ENCODE measurements at regions of chr10 and their contacts with region 1.

Region 1: GRCh38 chr10:122342293-122343134 is 32.0 kb upstream of the PLEKHA1 start:
- DNase-seq: peak in 2 of 5 donors; percentile 43 to 44
- ATAC-seq: peak in 2 of 4 donors; percentile 38 to 46
- H3K4me3 ChIP-seq: no peak overlapping the region
- H3K27ac ChIP-seq: peak overlapping the region in 7 of 12 donors; percentile 30 to 79 (median 69)
- H3K4me1 ChIP-seq: peaks cover 0 to 39% (median 8%) of the 10 kb centered on the region in 12 donors
- H3K27me3 ChIP-seq: no peaks in the 10 kb centered on the region
- CTCF ChIP-seq: peak; percentile 75 to 92 (median 82)
- POLR2A ChIP-seq: no peak

Region 2: DNA sequence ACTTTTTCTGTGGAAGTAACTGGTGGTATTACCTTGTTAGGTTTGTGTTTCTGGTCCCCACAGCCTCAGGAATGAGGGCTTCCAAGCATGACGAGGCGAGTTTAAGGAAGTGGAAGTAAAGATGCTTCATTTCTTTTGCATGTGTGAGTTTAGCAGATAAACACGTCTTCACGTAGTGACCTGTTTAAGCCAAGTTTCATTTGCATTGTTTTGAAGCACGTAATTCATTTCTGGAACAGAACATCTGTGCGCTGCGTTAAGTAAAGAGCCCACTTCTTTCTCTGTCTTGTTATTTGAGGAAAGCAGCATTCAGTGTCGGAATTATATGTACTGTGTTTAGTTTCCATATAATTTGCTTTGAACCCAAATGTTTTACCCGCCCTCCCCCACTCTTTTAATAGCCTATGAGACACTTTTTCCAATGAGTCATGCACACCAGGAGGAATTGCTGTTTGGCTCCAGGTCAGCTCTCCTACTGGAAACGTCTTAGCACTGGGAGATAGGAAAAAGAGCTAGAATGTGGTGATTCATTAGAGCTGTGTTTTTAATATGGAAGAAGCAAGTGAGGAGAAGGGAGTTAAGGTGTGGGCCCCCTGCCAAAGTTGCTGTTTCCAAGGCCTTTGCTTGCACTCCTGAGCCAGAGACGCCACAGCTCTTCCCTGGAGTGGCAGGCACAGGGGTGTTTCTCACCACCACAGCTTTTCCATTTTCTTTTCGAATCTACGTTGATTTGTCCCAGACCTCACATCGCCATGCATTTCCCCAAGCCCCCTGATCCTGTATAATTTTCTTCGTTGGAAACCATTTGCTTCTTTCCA is 34.6 kb before region 1 on chr10:
- intact Hi-C with region 1: loop called in 5 of 10 experiments (anchors 5 kb)
- DNase-seq: peak; percentile 77 to 88 (median 78)
- ATAC-seq: peak; percentile 89 to 93 (median 91)
- H3K4me3 ChIP-seq: peak overlapping the region in 8 of 12 donors; percentile 2 to 30 (median 14)
- H3K27ac ChIP-seq: peak overlapping the region; percentile 71 to 91 (median 82)
- H3K4me1 ChIP-seq: peaks cover 0 to 37% (median 21%) of the 10 kb centered on the region in 12 donors
- H3K27me3 ChIP-seq: no peaks in the 10 kb centered on the region
- CTCF ChIP-seq: no peak
- POLR2A ChIP-seq: no peak

Region 3: GRCh38 chr10:122374237-122374869 is 31.8 kb after region 1 on chr10 and contains the start of gene PLEKHA1:
- intact Hi-C with region 1: loop called in 1 of 10 experiments (anchors 1 kb)
- DNase-seq: peak; percentile 96 to 98 (median 97)
- ATAC-seq: peak; percentile 87 to 97 (median 94)
- H3K4me3 ChIP-seq: peak within 1 kb of the TSS; percentile 68 to 95 (median 90)
- H3K27ac ChIP-seq: peak within 1 kb of the TSS; percentile 94 to 99 (median 98)
- H3K4me1 ChIP-seq: peaks cover 0 to 67% (median 40%) of the 10 kb centered on the region in 12 donors
- H3K27me3 ChIP-seq: peaks cover 0 to 6% (median 0%) of the 10 kb centered on the region in 9 donors
- CTCF ChIP-seq: peak in 3 of 12 donors; percentile 8 to 40 (median 23)
- POLR2A ChIP-seq: peak in 1 of 2 donors; percentile 97
- total RNA-seq, gene PLEKHA1: 32.3 to 70.6 (median 44.7) TPM

Region 4: GRCh38 chr10:122549636-122550035 is 207.1 kb after region 1 on chr10:
- intact Hi-C with region 1: loop called in 1 of 10 experiments (anchors 5 kb)
- DNase-seq: no peak
- ATAC-seq: no peak
- H3K4me3 ChIP-seq: no peak overlapping the region
- H3K27ac ChIP-seq: no peak overlapping the region
- H3K4me1 ChIP-seq: peaks cover 0 to 4% (median 0%) of the 10 kb centered on the region in 12 donors
- H3K27me3 ChIP-seq: no peaks in the 10 kb centered on the region
- CTCF ChIP-seq: no peak
- POLR2A ChIP-seq: no peak